Natural killer cell (primary cell): ENCODE measurements at regions of chr17 and their contacts with region 1.

Region 1: GRCh38 chr17:2416010-2416734 is 15.3 kb upstream of the MNT start:
- DNase-seq: peak; percentile 85 to 92
- ATAC-seq: peak; percentile 82 to 97 (median 92)
- H3K4me3 ChIP-seq: no peak overlapping the region
- H3K4me3 Mint-ChIP-seq: no peak overlapping the region
- H3K27ac ChIP-seq: no peak overlapping the region
- H3K27ac Mint-ChIP-seq: no peak overlapping the region
- H3K4me1 ChIP-seq: no peaks in the 10 kb centered on the region
- H3K4me1 Mint-ChIP-seq: no peaks in the 10 kb centered on the region
- H3K27me3 ChIP-seq: no peaks in the 10 kb centered on the region
- H3K27me3 Mint-ChIP-seq: no peaks in the 10 kb centered on the region
- CTCF ChIP-seq: peak; percentile 99

Region 2: GRCh38 chr17:2386400-2387085 is 29.6 kb before region 1 on chr17:
- intact Hi-C with region 1: loop called (anchors 1 kb)
- DNase-seq: no peak
- ATAC-seq: no peak
- H3K4me3 ChIP-seq: no peak overlapping the region
- H3K4me3 Mint-ChIP-seq: no peak overlapping the region
- H3K27ac ChIP-seq: no peak overlapping the region
- H3K27ac Mint-ChIP-seq: no peak overlapping the region
- H3K4me1 ChIP-seq: peaks cover 22% of the 10 kb centered on the region
- H3K4me1 Mint-ChIP-seq: peaks cover 3 to 21% of the 10 kb centered on the region in 2 donors
- H3K27me3 ChIP-seq: no peaks in the 10 kb centered on the region
- H3K27me3 Mint-ChIP-seq: no peaks in the 10 kb centered on the region
- CTCF ChIP-seq: no peak

Region 3: GRCh38 chr17:2482218-2482617 is 66.0 kb after region 1 on chr17:
- intact Hi-C with region 1: no loop called
- DNase-seq: peak in 1 of 2 donors; percentile 47
- ATAC-seq: peak in 1 of 3 donors; percentile 54
- H3K4me3 ChIP-seq: no peak overlapping the region
- H3K4me3 Mint-ChIP-seq: peak overlapping the region; percentile 32
- H3K27ac ChIP-seq: no peak overlapping the region
- H3K27ac Mint-ChIP-seq: peak overlapping the region; percentile 7 to 10
- H3K4me1 ChIP-seq: peaks cover 4% of the 10 kb centered on the region
- H3K4me1 Mint-ChIP-seq: peaks cover 39 to 43% of the 10 kb centered on the region in 2 donors
- H3K27me3 ChIP-seq: no peaks in the 10 kb centered on the region
- H3K27me3 Mint-ChIP-seq: no peaks in the 10 kb centered on the region
- CTCF ChIP-seq: no peak